B cell (primary cell): ENCODE measurements at regions of chr5 and their contacts with region 1.

Region 1: DNA sequence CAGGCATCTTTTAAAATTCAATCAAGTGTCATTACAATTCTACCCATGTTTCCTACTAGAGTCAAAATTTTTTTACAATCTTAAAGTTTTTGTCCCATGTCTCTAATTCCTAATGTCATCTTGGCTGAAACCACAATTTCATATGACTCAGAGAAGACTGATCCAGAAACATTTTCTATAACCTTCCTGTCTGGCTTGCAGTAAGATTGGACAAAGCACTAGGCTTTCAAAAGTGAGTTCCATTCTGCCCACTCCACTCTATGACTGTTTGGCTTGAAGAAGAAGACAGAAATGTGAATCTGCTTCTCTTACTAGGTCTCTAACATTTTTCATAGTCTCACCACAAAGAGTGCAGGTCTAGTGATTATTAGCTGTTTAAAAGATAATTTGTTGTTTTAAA is 88.8 kb downstream of the NR3C1 start:
- DNase-seq: no peak
- ATAC-seq: no peak
- H3K4me3 ChIP-seq: no peak overlapping the region
- H3K4me3 Mint-ChIP-seq: peak overlapping the region; percentile 1
- H3K27ac ChIP-seq: peak overlapping the region in 1 of 2 donors; percentile 61
- H3K27ac Mint-ChIP-seq: no peak overlapping the region
- H3K4me1 ChIP-seq: peaks cover 12 to 23% of the 10 kb centered on the region in 2 donors
- H3K4me1 Mint-ChIP-seq: peaks cover 62% of the 10 kb centered on the region
- H3K27me3 ChIP-seq: no peaks in the 10 kb centered on the region
- H3K27me3 Mint-ChIP-seq: no peaks in the 10 kb centered on the region
- CTCF ChIP-seq: no peak

Region 2: DNA sequence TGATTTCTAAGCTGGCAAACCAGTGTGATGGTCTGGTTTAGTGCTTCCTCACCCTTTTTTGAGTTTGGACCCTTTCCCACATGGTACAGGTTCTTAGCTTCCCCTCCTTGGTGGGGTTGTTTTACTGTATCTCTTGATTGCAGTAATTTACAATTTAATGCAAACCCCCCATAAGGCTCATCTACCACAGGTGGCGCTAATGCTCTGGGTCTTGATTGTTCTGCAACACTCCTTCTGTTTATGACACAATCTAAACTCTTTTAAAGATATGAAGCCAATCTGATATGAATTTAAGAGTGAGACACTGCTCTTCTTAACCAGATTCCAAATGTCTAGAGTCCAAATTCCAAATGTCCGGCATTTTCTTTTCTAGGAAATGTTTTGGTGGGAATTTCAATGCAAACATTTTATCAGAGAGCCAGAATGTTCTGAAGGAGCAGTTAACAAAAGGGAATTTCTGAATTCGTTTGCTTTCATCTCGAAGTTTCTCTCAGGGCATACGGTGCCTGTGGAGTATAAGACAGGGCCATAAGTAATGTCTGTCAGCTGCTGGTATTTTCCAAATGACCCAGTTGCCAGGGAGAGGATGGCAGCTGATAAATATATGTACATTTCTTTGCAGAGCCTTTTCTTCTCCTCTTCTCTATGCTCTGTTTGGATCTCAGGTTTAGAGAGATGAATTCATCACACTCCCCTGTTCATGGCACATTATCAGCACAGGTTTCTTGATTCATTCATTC is 297.7 kb before region 1 on chr5:
- CTCF ChIA-PET with region 1: no interaction called
- POLR2A ChIA-PET with region 1: no interaction called
- intact Hi-C with region 1: no loop called
- DNase-seq: peak; percentile 46
- ATAC-seq: no peak
- H3K4me3 ChIP-seq: no peak overlapping the region
- H3K4me3 Mint-ChIP-seq: no peak overlapping the region
- H3K27ac ChIP-seq: no peak overlapping the region
- H3K27ac Mint-ChIP-seq: no peak overlapping the region
- H3K4me1 ChIP-seq: no peaks in the 10 kb centered on the region
- H3K4me1 Mint-ChIP-seq: peaks cover 11% of the 10 kb centered on the region
- H3K27me3 ChIP-seq: no peaks in the 10 kb centered on the region
- H3K27me3 Mint-ChIP-seq: no peaks in the 10 kb centered on the region
- CTCF ChIP-seq: peak; percentile 52

Region 3: DNA sequence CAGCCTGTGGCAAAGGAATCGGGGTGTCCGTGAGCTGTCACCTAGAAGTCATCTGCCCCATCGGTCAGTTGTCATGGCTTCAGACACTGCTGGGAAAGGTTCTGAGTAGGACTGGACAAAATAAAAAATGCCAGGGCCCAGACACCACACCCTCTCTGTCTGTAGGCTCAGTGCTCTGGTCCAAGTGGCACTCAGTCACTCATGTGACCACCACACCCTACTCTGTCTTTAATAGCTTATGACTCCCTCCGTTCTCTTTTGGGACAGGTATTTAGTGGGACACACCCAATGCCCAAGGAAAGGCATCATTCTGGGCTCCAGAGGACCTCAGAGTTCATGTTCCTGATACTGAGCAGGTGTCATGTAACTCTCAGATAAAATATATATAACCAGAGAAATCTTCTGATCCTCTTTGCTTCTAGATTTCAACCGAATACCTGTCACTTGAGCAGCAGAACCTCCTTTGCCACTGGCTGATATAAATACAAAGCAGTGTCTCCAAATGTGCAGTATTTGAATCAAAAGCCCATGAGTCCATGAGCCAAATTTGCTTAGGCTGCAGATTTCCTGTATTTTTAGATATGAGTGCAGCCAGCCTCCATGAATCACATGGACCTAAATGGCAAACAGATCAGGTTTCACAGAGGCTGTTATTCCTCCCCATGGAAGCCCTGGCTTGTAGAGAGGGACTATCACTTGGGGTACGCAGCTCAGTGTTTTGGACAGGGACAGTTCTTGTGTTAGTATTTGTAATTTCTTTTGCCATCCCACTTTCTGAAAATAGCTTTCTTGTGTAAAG is 272.5 kb before region 1 on chr5:
- CTCF ChIA-PET with region 1: no interaction called
- POLR2A ChIA-PET with region 1: no interaction called
- intact Hi-C with region 1: no loop called
- DNase-seq: no peak
- ATAC-seq: no peak
- H3K4me3 ChIP-seq: no peak overlapping the region
- H3K4me3 Mint-ChIP-seq: no peak overlapping the region
- H3K27ac ChIP-seq: no peak overlapping the region
- H3K27ac Mint-ChIP-seq: no peak overlapping the region
- H3K4me1 ChIP-seq: no peaks in the 10 kb centered on the region
- H3K4me1 Mint-ChIP-seq: no peaks in the 10 kb centered on the region
- H3K27me3 ChIP-seq: no peaks in the 10 kb centered on the region
- H3K27me3 Mint-ChIP-seq: no peaks in the 10 kb centered on the region
- CTCF ChIP-seq: no peak

Region 4: DNA sequence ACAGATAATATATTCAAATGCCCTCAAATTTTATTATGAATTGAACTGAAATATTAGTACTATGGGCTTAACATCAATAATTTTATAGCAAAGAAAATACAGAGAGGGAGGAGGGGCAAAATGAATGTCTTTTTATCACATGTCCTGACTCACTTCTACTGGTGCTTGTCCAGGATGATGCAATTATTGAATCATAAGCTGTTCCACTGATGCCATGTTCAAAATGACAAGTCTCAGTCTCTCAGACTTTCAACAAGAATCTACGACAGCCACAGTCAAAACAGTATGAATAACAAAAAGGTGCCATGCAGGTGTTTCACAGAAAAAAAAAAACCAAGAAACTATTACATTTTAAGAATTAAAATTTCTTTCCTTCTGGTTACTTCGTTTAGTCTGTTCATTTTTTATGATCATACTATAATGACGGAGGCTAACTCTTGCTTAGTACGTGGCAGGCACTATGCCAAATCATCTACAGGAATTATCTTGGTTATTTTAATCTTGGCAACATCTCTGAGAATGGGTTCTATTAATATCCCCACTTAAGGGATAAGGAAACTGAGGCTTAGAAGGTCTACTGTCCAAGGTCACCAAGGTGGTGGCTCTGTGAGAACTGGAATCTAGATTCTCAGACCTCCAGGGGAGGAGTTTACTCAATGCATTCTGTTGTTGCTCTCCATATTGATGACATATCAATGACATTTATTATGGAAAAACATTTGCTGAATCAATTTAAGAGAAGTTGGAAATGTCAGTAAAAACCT is 27.3 kb after region 1 on chr5:
- CTCF ChIA-PET with region 1: no interaction called
- POLR2A ChIA-PET with region 1: interaction called, 14 read pairs
- intact Hi-C with region 1: no loop called
- DNase-seq: no peak
- ATAC-seq: no peak
- H3K4me3 ChIP-seq: no peak overlapping the region
- H3K4me3 Mint-ChIP-seq: no peak overlapping the region
- H3K27ac ChIP-seq: no peak overlapping the region
- H3K27ac Mint-ChIP-seq: no peak overlapping the region
- H3K4me1 ChIP-seq: peaks cover 4 to 12% of the 10 kb centered on the region in 2 donors
- H3K4me1 Mint-ChIP-seq: peaks cover 45% of the 10 kb centered on the region
- H3K27me3 ChIP-seq: no peaks in the 10 kb centered on the region
- H3K27me3 Mint-ChIP-seq: no peaks in the 10 kb centered on the region
- CTCF ChIP-seq: no peak

Region 5: GRCh38 chr5:143376911-143377813 is 62.5 kb after region 1 on chr5:
- CTCF ChIA-PET with region 1: no interaction called
- POLR2A ChIA-PET with region 1: no interaction called
- intact Hi-C with region 1: no loop called
- DNase-seq: no peak
- ATAC-seq: no peak
- H3K4me3 ChIP-seq: no peak overlapping the region
- H3K4me3 Mint-ChIP-seq: no peak overlapping the region
- H3K27ac ChIP-seq: no peak overlapping the region
- H3K27ac Mint-ChIP-seq: peak overlapping the region; percentile 28
- H3K4me1 ChIP-seq: peaks cover 0 to 27% of the 10 kb centered on the region in 2 donors
- H3K4me1 Mint-ChIP-seq: peaks cover 74% of the 10 kb centered on the region
- H3K27me3 ChIP-seq: no peaks in the 10 kb centered on the region
- H3K27me3 Mint-ChIP-seq: no peaks in the 10 kb centered on the region
- CTCF ChIP-seq: no peak